Thyroid gland (tissue), 4 donors: ENCODE measurements at regions of chr2 and their contacts with region 1.

Region 1: DNA sequence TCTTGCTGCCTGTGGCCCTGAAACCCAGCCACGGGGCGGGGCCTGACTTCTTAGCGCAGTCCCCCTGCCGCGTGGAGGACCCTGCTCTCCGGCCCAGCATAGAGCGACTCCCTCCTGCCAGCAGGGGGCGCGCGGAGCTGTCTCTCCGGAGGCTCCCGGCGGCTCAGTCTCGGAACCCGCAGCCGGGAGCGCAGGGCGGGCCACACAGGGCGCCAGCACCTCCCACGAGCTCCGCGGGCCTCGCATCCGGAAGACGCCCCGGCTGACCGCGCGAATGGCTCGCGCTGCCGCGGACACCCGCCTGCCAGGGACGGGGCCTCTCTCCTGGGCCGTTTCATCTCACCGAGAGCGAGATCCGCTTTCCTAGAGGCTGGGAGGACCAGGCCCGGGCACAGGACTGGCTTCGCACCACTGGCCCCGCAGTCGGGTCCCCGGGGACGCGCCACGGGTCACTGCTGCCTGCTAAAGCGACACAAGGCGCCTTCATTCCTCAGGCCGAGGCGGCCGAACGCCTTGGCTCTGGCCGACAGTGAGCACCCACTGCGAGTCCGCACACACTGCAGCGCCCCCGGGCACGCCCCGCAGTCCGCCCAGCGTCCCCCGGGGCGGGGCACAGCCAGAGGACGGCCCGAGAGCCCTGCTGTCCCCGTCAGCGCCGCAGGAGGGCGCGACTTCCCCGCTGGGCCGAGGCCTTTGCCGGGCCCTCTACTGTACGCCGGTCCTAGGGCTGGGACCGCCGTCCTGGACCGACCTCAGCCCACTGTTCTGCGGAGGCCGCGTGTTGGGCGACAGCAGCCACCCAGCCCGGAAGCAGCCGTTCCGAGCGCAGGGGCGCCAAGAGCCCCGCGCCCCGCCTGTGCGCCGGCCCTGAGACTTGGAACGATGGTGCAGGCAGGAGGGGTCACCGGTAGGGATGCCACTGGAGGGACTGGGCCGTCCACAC is 39.0 kb upstream of the ARHGEF4 start:
- DNase-seq: peak; percentile 93 to 94
- H3K4me3 ChIP-seq: peak overlapping the region; percentile 29 to 69 (median 65)
- H3K27ac ChIP-seq: peak overlapping the region; percentile 87 to 96 (median 93)
- H3K4me1 ChIP-seq: peaks cover 6 to 17% of the 10 kb centered on the region in 2 donors
- H3K27me3 ChIP-seq: no peaks in the 10 kb centered on the region
- CTCF ChIP-seq: peak; percentile 68 to 99 (median 84)
- POLR2A ChIP-seq: peak in 1 of 2 donors; percentile 63

Region 2: DNA sequence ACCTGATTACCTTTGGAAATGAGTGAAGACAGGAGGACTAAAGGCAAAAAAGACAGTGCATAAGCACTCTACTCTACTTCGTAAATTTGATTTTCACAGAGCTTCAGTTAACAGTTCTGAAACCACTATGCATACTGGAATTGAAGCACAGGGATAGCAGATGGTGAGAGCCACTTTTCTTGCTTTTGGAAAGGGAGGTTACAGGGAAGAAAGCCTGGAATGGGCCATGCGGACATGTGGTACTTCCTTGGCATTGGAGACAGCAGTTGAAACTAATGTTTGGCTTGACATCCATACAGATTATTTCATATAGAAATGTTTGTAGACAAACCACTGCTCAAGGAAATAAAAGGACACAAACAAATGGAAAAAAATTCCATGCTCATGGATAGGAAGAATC is 1403.9 kb before region 1 on chr2:
- intact Hi-C with region 1: no loop called
- DNase-seq: no peak
- H3K4me3 ChIP-seq: no peak overlapping the region
- H3K27ac ChIP-seq: no peak overlapping the region
- H3K4me1 ChIP-seq: no peaks in the 10 kb centered on the region
- H3K27me3 ChIP-seq: no peaks in the 10 kb centered on the region
- CTCF ChIP-seq: no peak
- POLR2A ChIP-seq: no peak

Region 3: GRCh38 chr2:130252880-130253645 is 544.7 kb before region 1 on chr2:
- intact Hi-C with region 1: no loop called
- DNase-seq: no peak
- H3K4me3 ChIP-seq: no peak overlapping the region
- H3K27ac ChIP-seq: no peak overlapping the region
- H3K4me1 ChIP-seq: no peaks in the 10 kb centered on the region
- H3K27me3 ChIP-seq: peaks cover 3% of the 10 kb centered on the region
- CTCF ChIP-seq: no peak
- POLR2A ChIP-seq: no peak

Region 4: GRCh38 chr2:130850788-130851623 is 53.2 kb after region 1 on chr2:
- intact Hi-C with region 1: no loop called
- DNase-seq: peak in 1 of 2 donors; percentile 15
- H3K4me3 ChIP-seq: no peak overlapping the region
- H3K27ac ChIP-seq: no peak overlapping the region
- H3K4me1 ChIP-seq: peaks cover 0 to 7% of the 10 kb centered on the region in 2 donors
- H3K27me3 ChIP-seq: no peaks in the 10 kb centered on the region
- CTCF ChIP-seq: no peak
- POLR2A ChIP-seq: no peak

Region 5: GRCh38 chr2:130917006-130917688 is 119.4 kb after region 1 on chr2:
- intact Hi-C with region 1: loop called (anchors 5 kb)
- DNase-seq: no peak
- H3K4me3 ChIP-seq: no peak overlapping the region
- H3K27ac ChIP-seq: no peak overlapping the region
- H3K4me1 ChIP-seq: peaks cover 5% of the 10 kb centered on the region in 2 donors
- H3K27me3 ChIP-seq: no peaks in the 10 kb centered on the region
- CTCF ChIP-seq: no peak
- POLR2A ChIP-seq: no peak